Mammary epithelial cell (primary cell): ENCODE measurements at regions of chr18 and their contacts with region 1.

Region 1: DNA sequence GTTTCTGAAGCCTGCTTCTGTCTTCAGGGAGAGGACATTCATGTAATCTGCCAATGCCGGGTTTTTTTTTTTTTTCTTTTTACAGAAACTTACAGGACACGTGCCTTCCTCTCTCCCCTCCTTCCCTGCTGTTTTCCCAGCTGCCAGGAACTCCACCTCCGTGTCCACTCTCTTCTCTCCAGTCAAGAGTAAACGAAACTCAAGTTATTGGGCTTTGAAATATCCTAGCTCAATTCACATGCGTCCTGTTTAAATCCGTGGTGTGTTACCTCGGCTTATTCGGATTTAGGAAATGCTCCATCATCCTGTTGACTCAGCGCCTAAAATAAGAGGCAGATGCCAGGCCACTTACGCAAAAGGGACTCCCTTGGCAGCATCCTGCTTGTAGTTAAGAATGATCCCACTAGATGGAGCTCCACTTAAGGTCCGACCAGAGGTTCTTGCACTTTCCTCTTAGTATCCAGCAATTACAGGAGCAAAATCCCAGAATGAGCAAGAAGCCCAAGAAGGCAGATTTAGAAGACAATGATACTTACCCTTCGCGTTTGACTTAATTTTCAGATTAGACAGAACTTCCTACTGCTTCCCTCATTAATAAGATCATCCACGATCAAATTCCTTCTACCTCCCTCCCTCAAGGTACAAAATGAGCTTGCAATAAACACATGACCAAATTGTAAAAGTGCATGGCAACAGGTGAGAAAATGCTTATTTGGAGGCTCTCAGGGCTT is 97.2 kb upstream of the ZCCHC2 start:
- DNase-seq: peak; percentile 93
- H3K4me3 ChIP-seq: peak overlapping the region in 2 of 3 experiments; percentile 1 to 9
- H3K27ac ChIP-seq: peak overlapping the region; percentile 41
- H3K4me1 ChIP-seq: peaks cover 12% of the 10 kb centered on the region
- H3K27me3 ChIP-seq: no peaks in the 10 kb centered on the region
- CTCF ChIP-seq: peak; percentile 83 to 91

Region 2: GRCh38 chr18:62324917-62325805 is 100.5 kb before region 1 on chr18 and contains the start of gene TNFRSF11A:
- CTCF ChIA-PET with region 1: no interaction called
- dilution Hi-C with region 1: no loop called
- in situ Hi-C with region 1: no loop called
- intact Hi-C with region 1: loop called (anchors 1 kb)
- DNase-seq: peak; percentile 58
- H3K4me3 ChIP-seq: peak within 1 kb of the TSS; percentile 54 to 71 (median 64)
- H3K27ac ChIP-seq: no peak within 1 kb of the TSS
- H3K4me1 ChIP-seq: peaks cover 14% of the 10 kb centered on the region
- H3K27me3 ChIP-seq: peaks cover 3% of the 10 kb centered on the region
- CTCF ChIP-seq: peak; percentile 7 to 47
- total RNA-seq, gene TNFRSF11A: 0.50 to 6.1 TPM

Region 3: DNA sequence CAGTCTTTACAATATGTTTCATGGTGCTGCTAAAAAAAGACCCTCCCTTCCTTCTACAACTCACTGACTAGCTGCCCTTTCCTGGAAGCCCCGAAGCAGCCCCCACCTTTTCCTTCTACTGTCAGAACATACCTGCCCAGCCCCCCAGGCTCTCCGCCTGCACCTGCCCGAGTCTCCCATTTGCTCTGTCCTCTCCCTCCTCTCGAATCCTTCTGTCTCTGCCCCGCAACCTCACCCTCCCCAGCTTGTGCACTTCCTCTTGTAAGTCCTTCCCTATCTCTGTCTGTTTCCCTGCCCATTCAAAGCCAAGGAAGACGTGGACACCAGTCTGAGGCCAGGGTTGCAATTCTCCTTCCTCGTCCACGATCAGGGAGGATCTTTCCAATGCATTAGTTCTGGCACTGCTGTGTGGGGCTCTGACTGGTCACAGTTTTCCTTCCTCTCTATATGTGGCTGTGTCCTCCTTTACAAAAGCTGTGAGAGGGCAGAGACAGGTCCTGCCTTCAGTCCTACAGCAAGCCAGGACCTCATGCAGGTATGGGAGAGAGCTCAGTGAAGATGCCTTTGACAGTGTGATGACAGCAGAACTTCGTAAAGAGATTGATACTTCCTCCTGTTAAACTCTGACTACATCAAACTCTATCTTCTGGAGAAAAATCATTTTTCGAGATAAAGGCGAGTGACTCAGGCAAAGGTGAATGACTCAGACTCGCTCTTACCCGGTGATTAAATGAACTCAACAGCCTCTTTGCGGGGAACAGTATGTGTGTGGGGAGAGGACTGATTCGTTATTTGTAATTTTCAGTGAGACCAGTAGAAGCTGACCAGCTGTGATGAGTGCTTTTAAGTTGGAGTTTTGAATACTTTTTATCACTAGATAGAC is 86.3 kb before region 1 on chr18:
- CTCF ChIA-PET with region 1: no interaction called
- dilution Hi-C with region 1: no loop called
- in situ Hi-C with region 1: no loop called
- intact Hi-C with region 1: no loop called
- DNase-seq: peak; percentile 86
- H3K4me3 ChIP-seq: no peak overlapping the region
- H3K27ac ChIP-seq: no peak overlapping the region
- H3K4me1 ChIP-seq: peaks cover 15% of the 10 kb centered on the region
- H3K27me3 ChIP-seq: no peaks in the 10 kb centered on the region
- CTCF ChIP-seq: no peak

Region 4: GRCh38 chr18:62388855-62389760 is 36.5 kb before region 1 on chr18:
- CTCF ChIA-PET with region 1: no interaction called
- dilution Hi-C with region 1: no loop called
- in situ Hi-C with region 1: no loop called
- intact Hi-C with region 1: no loop called
- DNase-seq: peak; percentile 27
- H3K4me3 ChIP-seq: no peak overlapping the region
- H3K27ac ChIP-seq: no peak overlapping the region
- H3K4me1 ChIP-seq: no peaks in the 10 kb centered on the region
- H3K27me3 ChIP-seq: no peaks in the 10 kb centered on the region
- CTCF ChIP-seq: no peak

Region 5: GRCh38 chr18:62485684-62486083 is 60.1 kb after region 1 on chr18:
- CTCF ChIA-PET with region 1: no interaction called
- dilution Hi-C with region 1: no loop called
- in situ Hi-C with region 1: no loop called
- intact Hi-C with region 1: loop called (anchors 1 kb)
- DNase-seq: peak; percentile 96
- H3K4me3 ChIP-seq: peak overlapping the region in 1 of 3 experiments; percentile 20
- H3K27ac ChIP-seq: peak overlapping the region; percentile 88
- H3K4me1 ChIP-seq: peaks cover 20% of the 10 kb centered on the region
- H3K27me3 ChIP-seq: no peaks in the 10 kb centered on the region
- CTCF ChIP-seq: no peak

Region 6: DNA sequence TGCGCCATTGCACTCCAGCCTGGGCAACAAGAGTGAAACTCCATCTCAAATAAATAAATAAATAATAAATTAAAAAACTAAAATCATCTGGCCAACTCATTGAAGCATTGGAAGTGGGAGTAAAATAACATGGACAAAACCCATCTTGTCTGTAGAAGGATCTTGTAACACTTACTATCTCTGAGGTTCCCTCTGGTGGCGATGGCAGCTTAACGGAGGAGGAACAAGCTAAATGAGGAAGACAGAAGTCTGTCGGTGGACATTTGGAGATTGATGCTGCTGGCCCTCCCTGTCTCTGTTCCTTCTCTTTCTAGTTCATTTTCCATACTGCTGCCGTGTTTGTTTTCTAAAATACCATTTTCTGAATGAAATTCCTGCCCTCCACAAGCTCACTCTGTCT is 140.6 kb after region 1 on chr18:
- CTCF ChIA-PET with region 1: no interaction called
- dilution Hi-C with region 1: no loop called
- in situ Hi-C with region 1: no loop called
- intact Hi-C with region 1: loop called (anchors 5 kb)
- DNase-seq: no peak
- H3K4me3 ChIP-seq: no peak overlapping the region
- H3K27ac ChIP-seq: no peak overlapping the region
- H3K4me1 ChIP-seq: no peaks in the 10 kb centered on the region
- H3K27me3 ChIP-seq: no peaks in the 10 kb centered on the region
- CTCF ChIP-seq: peak in 1 of 2 donors; percentile 39